ENCODE measurements at regions of chr1 and their contacts with region 1.

Region 1: DNA sequence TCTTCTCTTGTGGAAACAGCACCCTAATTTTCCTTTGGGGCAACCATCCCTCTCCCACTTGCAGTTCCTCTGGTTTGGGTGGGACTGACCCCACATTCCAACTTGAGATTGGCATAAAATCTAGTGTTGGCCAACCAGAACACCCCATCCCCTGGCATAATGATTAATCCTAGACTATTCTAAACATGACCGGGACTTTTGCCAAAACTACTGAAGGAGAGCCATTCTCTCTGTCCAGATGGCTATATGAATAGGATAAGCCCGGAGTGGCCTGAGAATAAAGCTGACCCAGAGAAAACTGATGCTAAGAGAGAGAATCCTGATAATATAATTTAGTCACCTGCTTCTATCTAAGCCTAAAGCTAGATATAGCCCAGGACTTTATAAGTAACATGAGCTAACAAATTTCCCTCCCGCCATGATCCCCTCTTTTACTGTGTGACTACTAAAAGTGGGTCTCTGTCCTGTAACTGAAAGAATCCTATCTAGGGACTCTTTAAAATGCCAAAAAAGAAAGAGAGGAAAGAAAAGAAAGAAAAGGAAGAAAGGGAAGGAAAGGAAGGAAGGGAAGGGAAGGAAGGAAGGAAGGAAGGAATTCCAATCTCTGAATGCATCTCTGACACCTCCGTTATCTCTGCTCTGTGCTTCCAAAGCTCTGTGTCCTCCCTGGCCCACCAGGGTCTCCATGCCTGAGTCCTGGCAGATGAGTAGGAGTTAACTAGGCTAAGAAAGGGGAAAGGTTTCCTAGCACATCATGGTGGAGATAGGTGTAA is 28.0 kb upstream of the NRDC start:
- DNase-seq: no peak
- H3K4me3 ChIP-seq: no peak overlapping the region
- H3K27ac ChIP-seq: no peak overlapping the region
- H3K4me1 ChIP-seq: no peaks in the 10 kb centered on the region
- H3K27me3 ChIP-seq: no peaks in the 10 kb centered on the region
- CTCF ChIP-seq: no peak

Region 2: DNA sequence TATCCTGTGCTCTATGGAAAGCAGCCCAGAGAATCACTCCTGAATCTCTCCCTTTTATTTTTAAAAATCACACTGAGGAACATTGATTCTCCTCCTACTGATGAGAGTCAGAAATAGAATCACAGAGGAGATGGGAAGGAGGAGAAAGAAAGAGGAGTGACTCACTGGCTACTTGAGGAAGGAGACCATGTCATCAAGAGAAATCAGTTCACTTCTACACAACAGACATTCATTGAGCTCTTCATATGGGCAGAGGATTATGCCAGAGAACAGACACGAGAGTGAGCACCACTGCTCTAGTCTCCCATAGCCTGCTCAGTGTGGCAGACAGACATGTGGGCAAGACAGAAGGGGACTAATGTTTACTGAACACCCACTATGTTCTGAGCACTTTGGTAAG is 39.8 kb after region 1 on chr1:
- CTCF ChIA-PET with region 1: no interaction called
- dilution Hi-C with region 1: loop called (anchors 5 kb)
- in situ Hi-C with region 1: no loop called
- intact Hi-C with region 1: no loop called
- DNase-seq: no peak
- H3K4me3 ChIP-seq: no peak overlapping the region
- H3K27ac ChIP-seq: no peak overlapping the region
- H3K4me1 ChIP-seq: peaks cover 13% of the 10 kb centered on the region
- H3K27me3 ChIP-seq: no peaks in the 10 kb centered on the region
- CTCF ChIP-seq: no peak

Region 3: GRCh38 chr1:51989723-51990477 is 83.4 kb after region 1 on chr1:
- CTCF ChIA-PET with region 1: no interaction called
- dilution Hi-C with region 1: loop called (anchors 5 kb)
- in situ Hi-C with region 1: no loop called
- intact Hi-C with region 1: no loop called
- DNase-seq: no peak
- H3K4me3 ChIP-seq: peak overlapping the region; percentile 0 to 55 (median 49)
- H3K27ac ChIP-seq: no peak overlapping the region
- H3K4me1 ChIP-seq: no peaks in the 10 kb centered on the region
- H3K27me3 ChIP-seq: no peaks in the 10 kb centered on the region
- CTCF ChIP-seq: no peak

Region 4: DNA sequence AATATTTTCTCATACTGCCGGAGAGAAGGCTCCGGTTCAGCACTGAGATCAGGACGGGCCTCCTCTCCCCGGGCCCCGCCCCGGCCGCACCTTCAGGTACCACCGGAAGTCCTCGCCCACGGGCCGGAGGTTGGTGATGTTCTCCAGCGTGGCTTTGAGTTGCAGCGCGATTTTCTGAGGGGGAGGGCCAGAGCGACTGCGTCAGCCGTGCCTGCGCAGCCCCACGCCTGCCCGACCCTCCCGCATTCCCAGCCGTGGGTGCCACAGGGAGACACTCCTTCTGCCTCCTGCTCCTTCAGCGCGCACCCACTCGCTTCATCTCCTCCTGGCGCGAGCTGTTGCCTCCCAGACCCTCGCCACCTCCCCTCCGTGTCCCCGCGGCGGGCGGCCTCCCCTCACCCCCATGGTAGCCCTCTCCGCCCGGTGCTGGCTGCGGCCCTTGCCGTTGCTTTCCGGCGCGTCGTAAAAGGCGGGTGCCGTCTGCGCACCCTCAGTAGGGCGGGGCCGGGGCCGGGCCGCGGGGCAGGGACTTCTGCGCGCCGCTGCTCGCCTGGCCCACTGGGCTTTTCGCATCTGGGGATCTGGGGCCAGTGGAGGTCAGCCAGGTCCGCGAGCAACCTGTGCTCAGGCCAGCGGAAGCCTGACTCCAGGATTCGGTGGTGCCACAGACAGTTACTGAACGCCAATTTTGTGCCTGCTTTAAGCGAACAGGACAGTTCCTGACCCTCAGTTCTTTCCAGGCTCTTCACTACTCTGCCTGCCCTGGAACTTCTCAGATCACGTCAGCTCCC is 1313.9 kb after region 1 on chr1 and contains the start of gene CZIB:
- CTCF ChIA-PET with region 1: no interaction called
- dilution Hi-C with region 1: no loop called
- in situ Hi-C with region 1: no loop called
- intact Hi-C with region 1: no loop called
- DNase-seq: peak; percentile 94
- H3K4me3 ChIP-seq: peak within 1 kb of the TSS; percentile 79 to 99 (median 96)
- H3K27ac ChIP-seq: peak within 1 kb of the TSS; percentile 77
- H3K4me1 ChIP-seq: peaks cover 12% of the 10 kb centered on the region
- H3K27me3 ChIP-seq: no peaks in the 10 kb centered on the region
- CTCF ChIP-seq: no peak
- total RNA-seq, gene CZIB: 24.8 to 30.2 TPM